B cell (primary cell): ENCODE measurements at regions of chr15 and their contacts with region 1.

Region 1: DNA sequence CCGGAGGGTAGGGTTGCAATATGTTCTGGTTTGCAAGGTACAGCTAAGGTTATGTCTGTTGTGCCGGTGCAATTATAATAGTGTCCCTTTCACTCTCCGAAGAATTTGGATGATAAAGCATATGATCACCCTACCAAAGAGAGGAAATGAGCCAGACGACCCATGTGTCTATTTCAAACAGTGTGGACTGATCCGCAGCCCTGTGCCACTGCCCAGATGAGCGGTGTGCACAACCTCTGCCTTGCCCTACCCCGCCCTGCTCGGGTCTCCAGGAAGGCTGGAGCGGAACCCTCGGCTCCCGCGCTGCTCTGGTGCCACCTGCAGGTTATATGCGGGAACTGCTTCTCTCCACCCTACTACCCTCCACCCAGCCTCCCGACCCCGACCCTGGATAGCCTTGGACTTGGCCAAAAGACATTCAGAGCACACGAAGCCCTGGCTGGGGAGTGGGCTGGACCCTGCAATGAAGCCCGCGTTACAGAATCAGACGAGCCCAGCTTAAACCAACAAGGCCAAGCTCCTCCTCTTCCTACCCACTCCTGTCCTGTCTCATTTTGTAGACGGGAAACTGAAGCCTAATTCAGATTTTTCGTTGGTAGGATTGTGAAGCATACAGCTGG is 68.4 kb upstream of the CHRNB4 start:
- DNase-seq: peak; percentile 70
- ATAC-seq: peak; percentile 98
- H3K4me3 ChIP-seq: no peak overlapping the region
- H3K4me3 Mint-ChIP-seq: peak overlapping the region; percentile 53
- H3K27ac ChIP-seq: no peak overlapping the region
- H3K27ac Mint-ChIP-seq: no peak overlapping the region
- H3K4me1 ChIP-seq: peaks cover 3 to 6% of the 10 kb centered on the region in 2 donors
- H3K4me1 Mint-ChIP-seq: peaks cover 9% of the 10 kb centered on the region
- H3K27me3 ChIP-seq: peaks cover 0 to 18% (median 3%) of the 10 kb centered on the region in 4 experiments
- H3K27me3 Mint-ChIP-seq: peaks cover 45% of the 10 kb centered on the region
- CTCF ChIP-seq: peak; percentile 88

Region 2: DNA sequence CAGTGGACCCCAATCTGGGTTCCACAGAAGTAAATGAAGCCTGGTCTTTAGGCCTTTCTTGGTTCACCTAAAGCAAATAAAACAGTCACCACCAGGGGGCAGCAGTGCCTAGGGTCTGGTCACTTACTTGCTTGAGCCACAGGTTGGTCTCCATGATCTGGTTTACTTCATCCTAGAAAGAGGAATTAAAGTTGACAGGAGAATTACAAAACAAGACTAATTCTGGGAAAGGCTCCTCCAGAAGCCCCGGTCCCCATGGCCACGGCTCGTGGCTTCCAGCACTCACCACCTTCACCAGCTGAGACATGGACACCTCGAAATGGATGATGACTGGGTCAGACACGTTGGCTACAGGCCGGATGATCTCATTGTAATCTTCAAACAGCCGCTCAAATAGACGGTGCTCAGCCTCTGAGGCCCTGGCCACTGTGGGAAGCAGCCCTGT is 90.9 kb before region 1 on chr15:
- CTCF ChIA-PET with region 1: interaction called, 18 read pairs
- POLR2A ChIA-PET with region 1: no interaction called
- intact Hi-C with region 1: no loop called
- DNase-seq: peak; percentile 82
- ATAC-seq: peak; percentile 66
- H3K4me3 ChIP-seq: no peak overlapping the region
- H3K4me3 Mint-ChIP-seq: peak overlapping the region; percentile 37
- H3K27ac ChIP-seq: no peak overlapping the region
- H3K27ac Mint-ChIP-seq: no peak overlapping the region
- H3K4me1 ChIP-seq: peaks cover 4 to 13% of the 10 kb centered on the region in 2 donors
- H3K4me1 Mint-ChIP-seq: peaks cover 4% of the 10 kb centered on the region
- H3K27me3 ChIP-seq: peaks cover 0 to 32% (median 13%) of the 10 kb centered on the region in 4 experiments
- H3K27me3 Mint-ChIP-seq: peaks cover 34% of the 10 kb centered on the region
- CTCF ChIP-seq: peak; percentile 86

Region 3: GRCh38 chr15:78638658-78639314 is 70.6 kb before region 1 on chr15:
- CTCF ChIA-PET with region 1: interaction called, 30 read pairs
- POLR2A ChIA-PET with region 1: no interaction called
- intact Hi-C with region 1: no loop called
- DNase-seq: peak; percentile 52
- ATAC-seq: peak; percentile 51
- H3K4me3 ChIP-seq: no peak overlapping the region
- H3K4me3 Mint-ChIP-seq: no peak overlapping the region
- H3K27ac ChIP-seq: no peak overlapping the region
- H3K27ac Mint-ChIP-seq: no peak overlapping the region
- H3K4me1 ChIP-seq: peaks cover 12% of the 10 kb centered on the region in 2 donors
- H3K4me1 Mint-ChIP-seq: peaks cover 10% of the 10 kb centered on the region
- H3K27me3 ChIP-seq: peaks cover 0 to 21% (median 4%) of the 10 kb centered on the region in 4 experiments
- H3K27me3 Mint-ChIP-seq: peaks cover 10% of the 10 kb centered on the region
- CTCF ChIP-seq: peak; percentile 53